Sigmoid colon (tissue), 7 donors: ENCODE measurements at regions of chr5 and their contacts with region 1.

Region 1: GRCh38 chr5:67693956-67694809 is 497.6 kb upstream of the CD180 start:
- DNase-seq: peak; percentile 97
- H3K4me3 ChIP-seq: no peak overlapping the region
- H3K27ac ChIP-seq: peak overlapping the region; percentile 83 to 89 (median 86)
- H3K4me1 ChIP-seq: peaks cover 0 to 37% (median 29%) of the 10 kb centered on the region in 4 donors
- H3K27me3 ChIP-seq: no peaks in the 10 kb centered on the region
- CTCF ChIP-seq: no peak
- EP300 ChIP-seq: peak; percentile 90 to 100 (median 98)
- POLR2A ChIP-seq: no peak

Region 2: GRCh38 chr5:67268231-67269021 is 425.8 kb before region 1 on chr5:
- intact Hi-C with region 1: loop called (anchors 2 kb)
- DNase-seq: peak; percentile 95
- H3K4me3 ChIP-seq: peak overlapping the region in 2 of 4 donors; percentile 13 to 14
- H3K27ac ChIP-seq: peak overlapping the region; percentile 91 to 94 (median 92)
- H3K4me1 ChIP-seq: peaks cover 0 to 89% (median 80%) of the 10 kb centered on the region in 4 donors
- H3K27me3 ChIP-seq: no peaks in the 10 kb centered on the region
- CTCF ChIP-seq: no peak
- EP300 ChIP-seq: peak; percentile 94 to 99 (median 96)
- POLR2A ChIP-seq: no peak

Region 3: DNA sequence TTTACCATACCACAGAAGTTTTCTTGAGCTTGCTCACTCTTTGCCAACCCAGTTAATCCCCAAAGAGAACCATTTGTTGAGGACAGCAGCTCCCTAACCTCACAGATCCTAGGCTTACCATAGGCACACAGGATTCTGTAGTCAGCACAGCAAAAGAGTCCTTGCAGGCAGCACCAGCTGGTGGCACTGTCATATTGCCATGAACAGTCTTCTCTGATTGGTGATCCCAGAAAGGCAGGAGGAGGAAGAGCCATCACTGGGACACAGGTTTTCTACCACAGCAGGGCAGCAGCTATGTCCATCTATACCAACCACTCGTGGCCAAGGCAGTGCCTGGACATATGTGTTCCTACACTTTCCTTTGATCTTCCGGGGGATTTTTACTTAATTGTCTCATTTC is 200.5 kb before region 1 on chr5:
- intact Hi-C with region 1: loop called (anchors 5 kb)
- DNase-seq: no peak
- H3K4me3 ChIP-seq: no peak overlapping the region
- H3K27ac ChIP-seq: peak overlapping the region; percentile 50 to 79 (median 62)
- H3K4me1 ChIP-seq: peaks cover 0 to 47% (median 40%) of the 10 kb centered on the region in 4 donors
- H3K27me3 ChIP-seq: no peaks in the 10 kb centered on the region
- CTCF ChIP-seq: peak in 1 of 4 experiments; percentile 9
- EP300 ChIP-seq: no peak
- POLR2A ChIP-seq: no peak

Region 4: DNA sequence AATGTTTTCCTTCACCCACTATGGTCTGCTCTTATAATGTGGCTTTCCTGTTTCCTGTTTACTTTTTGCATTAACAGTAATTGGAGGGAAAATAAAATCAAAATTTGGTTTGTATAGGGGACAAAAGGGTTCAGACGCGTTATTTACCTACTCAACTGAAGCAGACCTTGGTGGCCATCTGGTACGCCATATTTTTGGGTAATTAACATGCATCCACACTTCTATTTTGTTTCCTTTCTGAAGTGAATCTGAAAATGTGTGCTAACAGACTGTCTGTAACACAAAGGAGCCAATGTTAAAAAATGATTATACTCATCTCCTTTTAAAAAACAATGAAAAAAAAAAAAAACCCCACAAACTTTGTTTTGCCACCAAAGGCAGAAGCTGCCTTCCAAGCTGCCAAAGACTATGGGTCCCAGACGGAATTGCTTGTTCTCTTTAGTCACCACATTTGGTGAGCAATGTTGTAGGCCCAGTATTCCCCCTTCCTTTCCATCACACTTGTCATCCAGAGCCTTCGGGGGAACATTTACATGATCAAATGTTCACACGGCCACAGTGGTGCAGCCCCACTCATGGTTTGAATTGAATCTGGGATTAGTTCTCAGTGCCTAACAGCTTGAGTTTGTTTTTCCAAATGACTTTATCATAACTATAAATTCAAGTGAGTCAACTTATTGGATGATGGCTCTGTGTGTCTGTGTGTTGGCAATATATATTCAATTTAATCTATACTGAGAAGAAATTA is 173.8 kb before region 1 on chr5:
- intact Hi-C with region 1: no loop called
- DNase-seq: no peak
- H3K4me3 ChIP-seq: no peak overlapping the region
- H3K27ac ChIP-seq: no peak overlapping the region
- H3K4me1 ChIP-seq: peaks cover 0 to 9% (median 4%) of the 10 kb centered on the region in 4 donors
- H3K27me3 ChIP-seq: no peaks in the 10 kb centered on the region
- CTCF ChIP-seq: no peak
- EP300 ChIP-seq: no peak
- POLR2A ChIP-seq: no peak

Region 5: DNA sequence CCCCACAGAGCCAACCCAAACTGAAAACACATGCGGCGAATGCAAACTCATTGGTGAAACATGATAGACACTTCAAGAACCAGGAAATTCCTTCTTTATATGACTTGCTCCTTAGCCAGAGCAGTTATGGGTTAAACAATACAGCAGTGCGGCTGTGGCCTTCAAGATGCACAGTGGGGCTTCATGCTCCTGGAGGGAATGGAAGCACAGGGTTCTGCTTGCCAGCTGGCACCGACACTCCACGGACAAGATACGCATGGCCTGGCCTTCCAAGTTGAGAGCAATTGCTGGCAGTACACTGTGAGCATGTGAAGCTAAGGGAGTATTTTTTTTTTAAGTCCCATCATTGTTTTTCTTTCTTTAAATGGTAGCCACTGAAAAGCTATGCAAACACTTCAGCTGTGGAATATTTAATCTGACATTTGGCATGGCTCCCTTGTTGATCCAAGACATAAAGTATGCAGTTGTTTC is 45.9 kb before region 1 on chr5:
- intact Hi-C with region 1: loop called (anchors 2 kb)
- DNase-seq: peak; percentile 98
- H3K4me3 ChIP-seq: no peak overlapping the region
- H3K27ac ChIP-seq: peak overlapping the region; percentile 77 to 82 (median 79)
- H3K4me1 ChIP-seq: peaks cover 0 to 62% (median 48%) of the 10 kb centered on the region in 4 donors
- H3K27me3 ChIP-seq: no peaks in the 10 kb centered on the region
- CTCF ChIP-seq: no peak
- EP300 ChIP-seq: peak; percentile 45 to 89 (median 74)
- POLR2A ChIP-seq: no peak

Region 6: DNA sequence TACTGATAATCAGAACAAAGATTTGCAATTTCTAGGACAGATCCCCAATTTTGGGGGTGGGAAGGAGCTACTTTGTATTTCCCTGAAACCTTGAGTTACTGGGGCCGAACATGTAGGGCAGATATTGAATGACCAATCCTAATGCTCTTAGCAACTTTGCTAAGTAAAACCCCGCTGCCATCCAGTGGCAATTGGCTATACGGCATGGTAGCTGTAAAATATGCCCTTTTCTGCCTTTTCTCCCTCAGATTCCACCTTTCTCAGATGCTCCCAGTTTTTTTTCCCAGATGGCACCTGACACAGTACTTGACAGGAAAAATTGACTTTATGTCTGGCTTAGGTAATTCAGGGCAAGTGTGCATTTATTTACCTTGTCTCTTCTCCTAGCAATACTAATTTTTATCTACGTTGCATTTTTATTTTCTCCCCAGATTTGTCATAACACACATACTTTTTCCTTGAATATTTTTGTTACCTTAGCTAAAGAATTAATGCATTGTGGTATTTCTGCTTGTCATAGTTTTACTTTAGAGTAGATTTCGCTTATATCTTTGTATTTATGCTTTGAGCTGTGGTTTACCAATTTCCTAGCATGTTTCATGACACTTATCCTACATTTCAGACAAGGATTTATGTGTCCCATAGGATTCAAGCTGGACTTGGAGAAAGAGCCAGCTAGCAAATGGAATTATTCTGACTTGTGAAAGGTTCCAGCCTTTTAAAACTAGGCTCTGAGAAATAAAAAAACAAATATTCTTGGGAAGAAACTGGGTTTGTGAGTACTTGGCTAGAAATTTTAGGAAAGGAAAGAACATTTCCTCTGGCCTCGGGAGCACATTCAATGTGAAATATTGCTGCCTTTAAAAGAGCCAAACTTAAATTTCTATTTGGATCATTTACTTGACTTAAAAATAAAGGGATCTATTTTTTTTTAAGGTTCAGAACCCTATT is 558.8 kb after region 1 on chr5:
- intact Hi-C with region 1: loop called (anchors 5 kb)
- DNase-seq: peak; percentile 82
- H3K4me3 ChIP-seq: peak overlapping the region in 3 of 4 donors; percentile 26 to 33 (median 26)
- H3K27ac ChIP-seq: peak overlapping the region; percentile 67 to 83 (median 80)
- H3K4me1 ChIP-seq: peaks cover 0 to 100% (median 99%) of the 10 kb centered on the region in 4 donors
- H3K27me3 ChIP-seq: no peaks in the 10 kb centered on the region
- CTCF ChIP-seq: peak in 3 of 4 experiments; percentile 64 to 73 (median 73)
- EP300 ChIP-seq: peak in 1 of 4 donors; percentile 4
- POLR2A ChIP-seq: no peak